ENCODE measurements at regions of chr10 and their contacts with region 1.

Region 1: GRCh38 chr10:97714048-97714371 is 480 bp downstream of the MARVELD1 start:
- DNase-seq: peak; percentile 74
- ATAC-seq: peak; percentile 31
- H3K4me3 ChIP-seq: peak overlapping the region; percentile 97
- H3K27ac ChIP-seq: peak overlapping the region; percentile 99
- H3K4me1 ChIP-seq: peaks cover 30% of the 10 kb centered on the region
- H3K27me3 ChIP-seq: no peaks in the 10 kb centered on the region
- CTCF ChIP-seq: 0 out of 2 replicates have a peak, but pooled peaks have one; percentile 23
- POLR2A ChIP-seq: peak; percentile 2; the same call in 1 of the 2 replicates
- RAD21 ChIP-seq: no peak

Region 2: DNA sequence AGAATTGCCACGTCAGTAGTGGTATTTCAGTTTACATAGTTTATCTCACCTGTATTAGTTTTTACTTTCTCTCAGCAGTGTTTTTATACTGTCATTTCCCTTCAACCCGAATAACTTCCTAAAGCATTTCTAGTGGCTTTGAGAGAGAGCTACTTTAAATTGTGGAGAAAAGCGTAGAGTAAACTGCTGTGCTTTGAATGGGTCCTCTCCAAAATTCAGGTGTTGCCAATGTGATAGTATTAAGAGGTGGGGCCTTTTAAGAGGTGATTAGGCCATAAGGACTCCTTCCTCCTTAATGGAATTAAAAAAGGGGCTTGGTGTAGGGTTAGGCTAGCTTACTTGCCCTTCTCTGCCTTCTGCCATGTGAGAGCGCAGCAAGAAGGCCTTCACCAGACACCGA is 783.5 kb before region 1 on chr10:
- CTCF ChIA-PET with region 1: no interaction called
- POLR2A ChIA-PET with region 1: no interaction called
- dilution Hi-C with region 1: no loop called
- in situ Hi-C with region 1: no loop called
- intact Hi-C with region 1: no loop called
- DNase-seq: no peak
- ATAC-seq: no peak
- H3K4me3 ChIP-seq: no peak overlapping the region
- H3K27ac ChIP-seq: no peak overlapping the region
- H3K4me1 ChIP-seq: no peaks in the 10 kb centered on the region
- H3K27me3 ChIP-seq: no peaks in the 10 kb centered on the region
- CTCF ChIP-seq: no peak
- POLR2A ChIP-seq: no peak
- RAD21 ChIP-seq: no peak

Region 3: DNA sequence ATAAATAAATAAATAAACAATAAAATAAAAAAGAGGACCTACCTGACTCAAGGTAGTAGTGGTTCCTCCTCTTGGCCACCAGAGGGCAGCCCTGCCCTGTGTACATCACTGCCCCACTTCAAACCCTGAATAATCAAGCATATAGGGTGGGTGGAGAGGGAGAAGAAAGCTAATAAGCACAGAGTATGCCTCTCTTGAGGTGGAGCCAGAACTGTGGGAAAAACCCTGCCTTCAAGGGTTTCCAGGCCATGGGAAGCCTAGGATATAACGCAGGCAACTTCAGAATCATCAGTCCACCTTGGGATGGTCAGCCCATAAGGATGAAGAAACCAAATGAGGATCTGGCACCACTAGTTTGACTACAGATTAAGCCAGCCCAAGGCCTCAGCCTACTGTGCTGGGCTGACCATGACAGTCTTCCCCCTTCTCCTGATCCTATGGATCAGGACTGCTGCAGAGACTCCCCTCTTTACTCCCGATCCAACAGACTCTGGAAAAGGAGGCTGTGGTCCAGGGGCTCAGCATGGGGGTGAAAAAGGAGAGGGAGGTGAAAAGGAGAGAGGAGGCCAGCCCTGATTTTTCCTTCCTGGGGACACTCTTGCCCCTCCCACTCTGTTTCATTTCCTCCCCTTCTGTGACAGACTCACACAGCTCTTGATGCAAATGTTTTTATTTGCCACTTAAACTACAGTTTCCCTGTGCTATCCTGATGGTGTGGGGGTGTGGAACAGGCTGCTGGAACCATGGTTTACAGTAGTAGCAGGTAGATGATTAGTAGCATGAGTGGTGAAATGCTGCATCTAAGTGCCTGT is 37.0 kb before region 1 on chr10:
- CTCF ChIA-PET with region 1: interaction called, 4 read pairs
- POLR2A ChIA-PET with region 1: no interaction called
- dilution Hi-C with region 1: no loop called
- in situ Hi-C with region 1: no loop called
- intact Hi-C with region 1: loop called (anchors 2 kb)
- DNase-seq: peak; percentile 63
- ATAC-seq: peak; percentile 82
- H3K4me3 ChIP-seq: no peak overlapping the region
- H3K27ac ChIP-seq: no peak overlapping the region
- H3K4me1 ChIP-seq: peaks cover 1% of the 10 kb centered on the region; the same call in 1 of the 2 replicates
- H3K27me3 ChIP-seq: no peaks in the 10 kb centered on the region
- CTCF ChIP-seq: peak; percentile 80
- POLR2A ChIP-seq: no peak
- RAD21 ChIP-seq: peak; percentile 85

Region 4: GRCh38 chr10:97701438-97702069 is 12.5 kb before region 1 on chr10:
- CTCF ChIA-PET with region 1: interaction called, 10 read pairs
- POLR2A ChIA-PET with region 1: interaction called, 11 read pairs
- dilution Hi-C with region 1: no loop called
- in situ Hi-C with region 1: no loop called
- intact Hi-C with region 1: no loop called
- DNase-seq: peak; percentile 77
- ATAC-seq: peak; percentile 100
- H3K4me3 ChIP-seq: no peak overlapping the region
- H3K27ac ChIP-seq: no peak overlapping the region
- H3K4me1 ChIP-seq: no peaks in the 10 kb centered on the region; the same call in 1 of the 2 replicates
- H3K27me3 ChIP-seq: no peaks in the 10 kb centered on the region
- CTCF ChIP-seq: peak; percentile 92
- POLR2A ChIP-seq: no peak
- RAD21 ChIP-seq: peak; percentile 90

Measured in IMR-90 (cell line).